Endothelial cell of umbilical vein (primary cell): ENCODE measurements at regions of chr9 and their contacts with region 1.

Region 1: GRCh38 chr9:130997925-130998596 is 10.9 kb upstream of the LAMC3 start:
- DNase-seq: peak; percentile 48
- H3K4me3 ChIP-seq: no peak overlapping the region
- H3K27ac ChIP-seq: no peak overlapping the region
- H3K4me1 ChIP-seq: no peaks in the 10 kb centered on the region
- H3K27me3 ChIP-seq: peaks cover 5 to 11% of the 10 kb centered on the region in 2 experiments
- CTCF ChIP-seq: peak; percentile 74 to 85
- POLR2A ChIP-seq: no peak

Region 2: DNA sequence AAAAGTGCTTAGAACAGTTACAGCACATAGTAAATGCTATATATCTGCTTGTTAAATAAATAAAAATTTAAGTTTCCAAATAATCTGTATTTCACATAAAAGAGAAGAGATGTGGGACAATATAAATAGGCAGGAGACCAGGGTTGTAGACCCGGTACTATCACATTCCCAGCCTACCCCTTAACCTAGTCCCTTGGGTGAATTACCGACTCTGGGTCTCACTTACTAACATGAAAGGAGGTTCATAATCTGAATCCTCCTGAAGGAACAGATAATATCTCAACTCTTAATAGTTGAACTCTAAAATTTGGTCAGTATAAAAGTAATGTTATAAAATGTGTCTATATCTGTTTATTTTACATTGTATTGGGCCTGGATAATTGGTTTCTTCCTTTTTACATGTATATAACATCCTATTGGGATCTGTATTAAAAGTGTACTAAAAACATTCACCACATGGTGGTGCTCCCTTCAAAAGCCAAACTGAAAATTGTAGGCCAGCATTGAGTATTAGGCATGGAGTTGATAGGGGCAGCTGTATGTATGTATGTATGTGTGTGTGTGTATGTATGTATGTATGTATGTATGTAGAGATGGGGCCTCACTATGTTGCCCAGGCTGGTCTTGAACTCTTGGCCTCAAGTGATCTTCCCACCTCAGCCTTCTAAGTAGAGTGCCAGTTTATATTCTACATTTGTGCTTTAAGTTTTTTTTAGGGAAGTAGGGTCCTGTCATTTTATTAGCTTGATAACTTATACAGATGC is 227.2 kb before region 1 on chr9:
- CTCF ChIA-PET with region 1: interaction called, 7 read pairs
- POLR2A ChIA-PET with region 1: no interaction called
- dilution Hi-C with region 1: no loop called
- intact Hi-C with region 1: loop called (anchors 2 kb)
- DNase-seq: peak; percentile 81
- H3K4me3 ChIP-seq: no peak overlapping the region
- H3K27ac ChIP-seq: no peak overlapping the region
- H3K4me1 ChIP-seq: peaks cover 27% of the 10 kb centered on the region
- H3K27me3 ChIP-seq: no peaks in the 10 kb centered on the region
- CTCF ChIP-seq: peak; percentile 30 to 47
- POLR2A ChIP-seq: no peak

Region 3: DNA sequence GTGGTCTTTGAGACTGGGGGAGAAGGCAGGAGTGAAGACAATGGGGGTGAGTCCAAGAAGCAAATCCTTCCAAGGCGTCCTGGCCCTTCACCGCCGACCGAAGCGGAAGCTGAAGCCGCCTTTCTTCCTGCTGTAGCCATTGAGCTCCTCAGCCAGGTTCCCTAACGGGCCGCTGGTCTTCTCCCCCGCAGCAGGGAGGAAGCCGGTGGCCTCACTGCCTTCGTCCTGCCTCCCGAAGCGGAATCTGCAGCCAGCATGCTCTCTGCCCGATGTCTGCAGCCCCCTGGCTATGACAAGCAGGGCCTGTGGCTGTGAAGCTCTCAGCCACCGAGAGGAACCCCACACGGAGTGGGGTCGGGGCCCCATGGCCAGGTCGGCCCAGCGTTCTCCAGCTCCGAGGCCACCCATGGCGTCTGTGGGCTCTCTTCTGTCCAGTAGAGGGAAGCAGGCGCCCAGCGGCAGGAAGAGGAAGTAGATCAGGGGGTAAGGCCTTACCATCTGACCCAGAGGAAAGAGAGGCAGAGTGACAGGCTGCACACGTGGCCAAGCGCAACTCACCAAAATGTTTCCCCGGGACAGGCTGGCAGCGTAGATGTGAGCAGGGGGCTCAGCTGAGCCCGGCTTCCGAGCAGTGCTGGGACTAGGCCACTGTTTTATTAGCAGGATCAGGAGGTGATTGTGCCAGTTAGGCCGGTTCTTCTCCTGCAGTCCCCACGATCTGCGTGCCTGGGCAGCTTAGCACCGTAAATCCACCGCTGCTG is 104.5 kb before region 1 on chr9:
- CTCF ChIA-PET with region 1: interaction called, 46 read pairs
- POLR2A ChIA-PET with region 1: no interaction called
- dilution Hi-C with region 1: no loop called
- intact Hi-C with region 1: loop called (anchors 1 kb)
- DNase-seq: no peak
- H3K4me3 ChIP-seq: no peak overlapping the region
- H3K27ac ChIP-seq: no peak overlapping the region
- H3K4me1 ChIP-seq: no peaks in the 10 kb centered on the region
- H3K27me3 ChIP-seq: no peaks in the 10 kb centered on the region
- CTCF ChIP-seq: peak in 1 of 2 donors; percentile 16
- POLR2A ChIP-seq: no peak

Region 4: GRCh38 chr9:130927995-130928900 is 69.8 kb before region 1 on chr9:
- CTCF ChIA-PET with region 1: interaction called, 10 read pairs
- POLR2A ChIA-PET with region 1: no interaction called
- dilution Hi-C with region 1: no loop called
- intact Hi-C with region 1: no loop called
- DNase-seq: peak; percentile 29
- H3K4me3 ChIP-seq: no peak overlapping the region
- H3K27ac ChIP-seq: no peak overlapping the region
- H3K4me1 ChIP-seq: peaks cover 7% of the 10 kb centered on the region
- H3K27me3 ChIP-seq: peaks cover 8 to 12% of the 10 kb centered on the region in 2 experiments
- CTCF ChIP-seq: no peak
- POLR2A ChIP-seq: no peak

Region 5: DNA sequence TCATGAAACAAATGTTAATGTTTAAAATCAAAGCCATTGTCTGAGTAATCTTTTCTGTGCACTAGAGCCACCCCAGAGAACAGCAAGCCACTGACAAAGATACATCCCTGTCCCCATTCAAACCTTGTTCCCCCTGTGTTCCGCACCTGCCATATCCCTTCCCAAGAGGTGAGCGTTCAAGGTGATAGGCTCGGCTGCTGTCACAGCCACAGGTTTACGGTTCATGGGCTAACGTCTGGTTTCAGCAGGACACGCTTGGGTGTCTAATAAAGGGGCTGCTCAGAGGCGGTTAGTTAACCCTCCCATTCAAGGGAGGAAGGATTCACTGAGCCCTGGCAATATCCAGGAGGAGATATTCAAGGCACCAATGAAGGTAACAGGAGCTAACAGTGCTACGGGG is 13.5 kb before region 1 on chr9:
- CTCF ChIA-PET with region 1: interaction called, 13 read pairs
- POLR2A ChIA-PET with region 1: no interaction called
- dilution Hi-C with region 1: no loop called
- intact Hi-C with region 1: no loop called
- DNase-seq: no peak
- H3K4me3 ChIP-seq: no peak overlapping the region
- H3K27ac ChIP-seq: no peak overlapping the region
- H3K4me1 ChIP-seq: no peaks in the 10 kb centered on the region
- H3K27me3 ChIP-seq: peaks cover 4 to 7% of the 10 kb centered on the region in 2 experiments
- CTCF ChIP-seq: no peak
- POLR2A ChIP-seq: no peak

Region 6: GRCh38 chr9:131116281-131117115 is 118.4 kb after region 1 on chr9:
- CTCF ChIA-PET with region 1: no interaction called
- POLR2A ChIA-PET with region 1: no interaction called
- dilution Hi-C with region 1: no loop called
- intact Hi-C with region 1: no loop called
- DNase-seq: no peak
- H3K4me3 ChIP-seq: peak overlapping the region in 1 of 3 experiments; percentile 22
- H3K27ac ChIP-seq: peak overlapping the region; percentile 96
- H3K4me1 ChIP-seq: peaks cover 27% of the 10 kb centered on the region
- H3K27me3 ChIP-seq: no peaks in the 10 kb centered on the region
- CTCF ChIP-seq: no peak
- POLR2A ChIP-seq: no peak